Astrocyte of the cerebellum (primary cell): ENCODE measurements at regions of chr9 and their contacts with region 1.

Region 1: GRCh38 chr9:93159601-93160471 is 24.1 kb upstream of the WNK2 start:
- DNase-seq: peak; percentile 73
- H3K4me3 ChIP-seq: no peak overlapping the region
- CTCF ChIP-seq: peak; percentile 99

Region 2: DNA sequence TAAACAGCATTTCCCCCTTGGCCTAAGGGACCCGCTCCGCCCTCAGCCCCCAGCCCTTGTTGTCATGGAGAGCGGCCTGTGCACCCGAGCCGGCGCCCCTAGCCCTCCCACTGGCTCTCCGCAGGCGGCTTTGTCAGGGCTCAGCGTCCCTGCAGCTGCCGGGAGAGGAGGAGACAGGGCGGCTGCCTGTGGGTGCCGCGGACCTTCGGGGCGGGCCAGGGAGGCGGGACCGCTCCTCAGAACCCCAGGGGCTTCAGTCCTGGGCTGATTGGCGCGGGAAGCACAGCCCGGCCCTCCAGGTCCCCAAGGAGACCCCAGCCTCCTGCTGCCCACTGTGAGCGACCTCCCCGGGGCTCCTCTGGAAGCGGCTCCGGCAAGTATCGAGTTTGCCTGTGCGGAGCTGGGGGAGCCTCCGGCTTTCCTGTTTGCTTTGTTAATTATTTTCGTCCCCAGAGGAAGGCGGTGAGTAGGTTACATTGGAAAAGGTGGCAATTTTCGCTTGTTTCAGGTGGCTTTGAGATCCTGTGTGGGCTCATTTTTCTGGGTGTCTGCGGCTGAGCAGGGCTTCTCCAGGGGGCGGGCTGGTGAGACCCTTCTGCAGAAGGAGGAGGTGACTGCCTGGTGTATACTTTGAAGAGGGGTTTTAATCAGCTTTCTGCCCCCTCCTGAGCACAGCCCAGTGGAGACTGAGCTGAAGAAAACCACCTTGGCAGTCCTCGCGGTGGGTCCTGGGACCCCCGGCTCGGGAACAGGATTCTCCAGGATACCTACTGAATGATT is 212.4 kb before region 1 on chr9 and contains the start of gene FGD3:
- in situ Hi-C with region 1: no loop called
- DNase-seq: no peak
- H3K4me3 ChIP-seq: peak within 1 kb of the TSS; percentile 39
- CTCF ChIP-seq: no peak

Region 3: DNA sequence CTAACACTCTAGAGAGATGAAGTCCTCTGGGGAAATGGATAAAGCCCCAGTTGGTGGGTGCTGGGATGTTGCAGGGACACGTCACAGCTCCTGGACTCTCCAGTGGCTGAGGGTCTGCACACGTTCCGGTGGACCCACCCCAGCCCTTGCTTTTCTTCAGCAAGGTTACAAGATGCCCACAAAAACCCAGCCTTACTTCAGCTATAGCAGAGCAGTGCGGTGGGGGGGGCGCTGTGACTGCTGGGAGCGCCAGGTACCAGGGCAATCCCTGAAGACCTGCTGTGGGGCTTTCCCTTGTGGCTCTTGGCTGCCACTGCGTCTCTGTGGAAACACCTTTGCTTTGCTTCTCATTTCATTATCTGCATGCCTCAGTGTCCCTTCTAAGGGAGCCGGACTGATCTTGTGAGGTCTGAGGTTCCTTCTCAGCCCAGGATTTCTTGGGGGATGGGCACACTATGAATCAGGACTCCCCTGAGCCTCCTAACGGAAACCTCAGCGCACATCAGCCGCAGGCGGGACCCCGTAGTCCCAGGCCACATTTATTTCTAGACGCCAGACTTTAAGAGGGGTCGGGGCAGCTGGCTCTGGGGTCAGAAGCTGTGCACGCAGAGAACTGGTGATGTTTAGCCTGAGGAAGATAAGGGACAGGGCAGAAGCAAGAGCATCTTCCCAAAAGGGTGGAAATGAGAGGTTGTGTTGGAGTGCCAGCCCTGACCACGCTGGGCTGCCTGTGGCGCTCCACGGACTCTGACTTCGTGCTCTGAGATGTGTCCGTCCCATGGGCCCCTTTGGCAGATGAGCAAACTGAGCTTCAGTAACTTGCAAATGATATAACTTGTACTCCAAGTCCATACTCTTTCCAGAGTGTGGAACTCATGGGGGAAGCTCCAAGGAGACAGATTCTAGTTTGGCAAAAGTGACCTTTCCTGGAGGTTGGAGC is 130.9 kb after region 1 on chr9:
- in situ Hi-C with region 1: loop called (anchors 5 kb)
- DNase-seq: no peak
- H3K4me3 ChIP-seq: no peak overlapping the region
- CTCF ChIP-seq: no peak